Body of pancreas (tissue), 4 donors: ENCODE measurements at regions of chr13 and their contacts with region 1.

Region 1: DNA sequence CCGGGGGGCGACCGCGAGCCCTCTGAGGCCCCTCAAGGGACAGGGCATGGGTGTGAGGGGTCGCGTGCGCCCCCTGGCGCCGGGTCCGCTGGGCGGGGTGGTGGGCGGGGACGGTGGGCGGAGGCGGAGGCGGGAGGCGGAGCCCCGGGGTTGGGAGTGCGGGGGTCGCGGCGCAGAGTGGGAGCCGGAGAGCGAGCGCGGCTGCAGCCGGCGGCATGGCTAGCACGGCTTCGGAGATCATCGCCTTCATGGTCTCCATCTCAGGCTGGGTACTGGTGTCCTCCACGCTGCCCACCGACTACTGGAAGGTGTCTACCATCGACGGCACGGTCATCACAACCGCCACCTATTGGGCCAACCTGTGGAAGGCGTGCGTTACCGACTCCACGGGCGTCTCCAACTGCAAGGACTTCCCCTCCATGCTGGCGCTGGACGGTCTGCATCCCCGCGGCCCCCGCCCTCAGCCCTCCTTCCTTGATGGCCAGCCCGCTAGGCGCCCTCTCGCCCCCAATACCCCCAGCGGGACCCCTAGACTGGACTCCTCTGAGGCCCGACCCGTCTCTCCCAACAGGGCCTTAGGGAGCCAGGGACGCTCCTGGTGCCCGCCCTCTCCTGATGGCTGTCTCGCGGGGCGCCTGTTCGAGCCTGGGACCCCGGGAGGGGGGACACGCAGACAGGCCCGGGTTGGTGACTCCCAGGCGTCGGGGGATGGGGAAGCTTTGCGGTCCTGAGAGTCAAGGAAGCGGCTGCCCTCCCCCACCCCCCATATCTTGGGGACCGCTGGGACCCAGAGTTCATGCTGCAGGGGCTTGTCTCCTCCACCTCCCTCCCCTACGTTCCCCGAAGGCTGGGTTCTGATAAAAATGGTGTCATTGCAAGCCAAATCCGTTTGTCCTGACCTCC is at the start of gene CLDN10:
- DNase-seq: peak; percentile 82 to 88 (median 85)
- ATAC-seq: peak; percentile 82
- H3K4me3 ChIP-seq: peak within 1 kb of the TSS; percentile 50 to 73
- H3K27ac ChIP-seq: peak within 1 kb of the TSS; percentile 91 to 94 (median 93)
- H3K4me1 ChIP-seq: peaks cover 39% of the 10 kb centered on the region
- H3K27me3 ChIP-seq: no peaks in the 10 kb centered on the region
- CTCF ChIP-seq: peak; percentile 45 to 74 (median 61)
- POLR2A ChIP-seq: peak; percentile 57 to 79 (median 70)
- total RNA-seq, gene CLDN10: 72.8 to 228 TPM

Region 2: DNA sequence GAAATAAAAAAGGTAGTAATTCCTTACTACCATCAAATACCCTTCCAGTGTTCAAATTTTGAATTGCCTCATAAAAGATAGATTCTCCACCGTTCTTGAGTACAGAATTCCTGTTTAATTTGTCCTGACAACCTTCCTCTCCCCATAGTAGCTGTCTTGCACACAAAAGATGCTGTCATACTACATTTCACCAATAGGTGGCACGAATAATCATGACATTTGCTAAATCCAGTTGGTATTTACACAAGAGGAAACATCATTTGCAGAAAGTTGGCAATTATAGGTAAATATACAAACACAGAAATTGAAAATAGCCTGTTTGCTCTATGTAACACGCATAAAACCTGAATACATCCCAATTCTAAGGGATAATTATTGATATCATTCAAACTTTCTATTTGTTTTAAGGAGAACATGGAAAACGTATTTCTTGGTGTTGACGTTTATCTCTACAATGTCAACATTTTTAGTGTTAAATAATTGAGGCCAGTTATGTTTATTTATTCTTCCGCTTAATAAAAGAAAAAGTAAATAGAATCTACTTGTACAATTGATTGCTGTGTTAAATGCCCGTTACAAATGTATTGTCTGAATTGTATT is 58.6 kb before region 1 on chr13:
- intact Hi-C with region 1: loop called (anchors 10 kb)
- DNase-seq: peak in 2 of 4 donors; percentile 24 to 55
- ATAC-seq: peak; percentile 75
- H3K4me3 ChIP-seq: no peak overlapping the region
- H3K27ac ChIP-seq: no peak overlapping the region
- H3K4me1 ChIP-seq: peaks cover 23% of the 10 kb centered on the region
- H3K27me3 ChIP-seq: no peaks in the 10 kb centered on the region
- CTCF ChIP-seq: peak; percentile 30 to 89 (median 88)
- POLR2A ChIP-seq: no peak